AG04450 (cell line): ENCODE measurements at regions of chr1 and their contacts with region 1.

Region 1: GRCh38 chr1:156212833-156213643 is at the start of gene PMF1:
- DNase-seq: peak; percentile 83
- H3K4me3 ChIP-seq: peak within 1 kb of the TSS; percentile 96
- H3K27ac ChIP-seq: peak within 1 kb of the TSS; percentile 96
- H3K27me3 ChIP-seq: no peaks in the 10 kb centered on the region
- CTCF ChIP-seq: no peak
- polyA plus RNA-seq, gene PMF1: 43.5 and 53.3 TPM in 2 replicates

Region 2: DNA sequence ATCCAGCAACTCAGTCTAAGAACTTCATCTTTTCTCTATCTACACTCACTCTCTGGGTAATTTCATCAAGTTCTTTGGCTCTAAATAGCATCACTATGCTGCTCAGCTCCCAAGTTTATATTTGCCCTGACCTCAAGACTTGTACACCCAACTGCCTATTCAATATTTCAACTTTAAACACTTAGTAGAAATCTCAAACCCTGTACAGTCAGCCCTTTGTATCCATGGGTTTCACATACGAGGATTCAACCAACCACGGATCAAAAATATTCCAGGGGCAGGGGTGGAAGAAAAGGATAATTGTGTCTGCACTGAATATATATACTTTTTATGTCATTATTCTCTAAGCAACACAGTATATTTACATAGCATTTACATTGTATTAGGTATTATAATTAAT is 664.3 kb before region 1 on chr1:
- CTCF ChIA-PET with region 1: no interaction called
- POLR2A ChIA-PET with region 1: no interaction called
- DNase-seq: no peak
- H3K4me3 ChIP-seq: no peak overlapping the region
- H3K27ac ChIP-seq: no peak overlapping the region
- H3K27me3 ChIP-seq: no peaks in the 10 kb centered on the region
- CTCF ChIP-seq: no peak

Region 3: DNA sequence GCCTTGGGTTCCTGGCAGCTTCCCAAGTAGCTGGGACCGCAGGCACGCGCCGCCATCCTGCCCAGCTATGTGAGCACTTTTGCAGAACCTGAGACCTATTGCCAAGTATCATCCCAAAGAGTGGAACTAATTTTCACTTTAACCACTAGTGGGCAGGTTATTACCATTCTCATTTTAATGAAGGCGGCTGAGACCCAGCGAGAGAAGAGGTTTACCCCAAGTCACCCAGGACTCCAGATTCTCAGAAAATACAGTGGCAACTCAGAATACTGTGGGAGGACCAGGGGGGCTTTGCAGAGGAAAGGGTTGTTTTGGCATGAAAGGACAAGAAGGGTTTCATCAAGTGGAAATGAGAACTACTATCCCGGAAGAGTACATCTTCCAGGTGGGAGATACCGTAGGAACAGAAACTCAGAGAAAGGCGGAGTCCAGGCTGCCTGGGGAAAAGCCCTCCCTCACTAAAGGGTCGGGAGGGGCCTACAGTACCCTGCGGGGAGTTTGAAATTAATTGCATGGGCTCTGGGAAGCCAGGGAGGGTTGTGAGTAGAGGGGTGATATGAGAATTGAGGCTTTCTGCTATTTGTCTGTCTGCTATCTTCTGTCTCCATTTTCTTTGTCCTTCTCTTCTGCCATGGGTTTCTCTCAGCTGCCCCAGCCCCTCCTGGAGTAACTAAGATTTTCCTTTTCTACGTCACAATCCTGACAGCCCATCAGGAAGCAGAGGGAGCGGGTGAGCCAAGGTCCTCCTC is 66.8 kb before region 1 on chr1:
- CTCF ChIA-PET with region 1: interaction called, 4 read pairs
- POLR2A ChIA-PET with region 1: interaction called, 11 read pairs
- DNase-seq: peak; percentile 86
- H3K4me3 ChIP-seq: no peak overlapping the region
- H3K27ac ChIP-seq: no peak overlapping the region
- H3K27me3 ChIP-seq: peaks cover 13% of the 10 kb centered on the region
- CTCF ChIP-seq: peak; percentile 64

Region 4: DNA sequence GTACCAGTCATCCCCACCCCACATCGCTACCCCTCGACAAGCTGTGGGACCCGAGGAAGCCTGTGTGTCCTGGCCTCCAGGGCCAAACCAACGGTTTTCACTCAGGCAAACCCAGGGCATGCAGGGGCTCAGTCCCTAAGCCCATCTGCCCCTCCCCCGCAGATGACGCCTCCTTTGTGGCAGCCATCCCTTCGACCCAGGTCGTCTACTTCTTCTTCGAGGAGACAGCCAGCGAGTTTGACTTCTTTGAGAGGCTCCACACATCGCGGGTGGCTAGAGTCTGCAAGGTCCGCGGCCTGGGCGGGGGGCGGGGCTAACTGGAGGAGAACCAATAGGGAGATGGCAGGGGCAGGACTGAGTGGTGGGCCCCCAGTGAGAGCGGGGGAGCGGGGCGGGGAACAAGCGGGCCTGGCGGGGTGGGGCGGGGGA is 52.3 kb before region 1 on chr1:
- CTCF ChIA-PET with region 1: no interaction called
- POLR2A ChIA-PET with region 1: interaction called, 10 read pairs
- DNase-seq: peak; percentile 42
- H3K4me3 ChIP-seq: peak overlapping the region; percentile 52
- H3K27ac ChIP-seq: no peak overlapping the region
- H3K27me3 ChIP-seq: no peaks in the 10 kb centered on the region
- CTCF ChIP-seq: no peak

Region 5: GRCh38 chr1:156193488-156194299 is 19.3 kb before region 1 on chr1 and contains the start of gene SLC25A44:
- CTCF ChIA-PET with region 1: interaction called, 7 read pairs
- POLR2A ChIA-PET with region 1: interaction called, 18 read pairs
- DNase-seq: peak; percentile 98
- H3K4me3 ChIP-seq: peak within 1 kb of the TSS; percentile 92
- H3K27ac ChIP-seq: peak within 1 kb of the TSS; percentile 57
- H3K27me3 ChIP-seq: no peaks in the 10 kb centered on the region
- CTCF ChIP-seq: peak; percentile 55
- polyA plus RNA-seq, gene SLC25A44: 24.1 TPM in 2 replicates